ENCODE measurements at regions of chr3 and their contacts with region 1.

Region 1: GRCh38 chr3:51941798-51942602 is at the starts of genes PARP3 and RRP9:
- DNase-seq: peak; percentile 100
- H3K4me3 Mint-ChIP-seq: peak within 1 kb of the TSS; percentile 88
- H3K27ac Mint-ChIP-seq: peak within 1 kb of the TSS; percentile 82
- H3K4me1 Mint-ChIP-seq: peaks cover 33% of the 10 kb centered on the region
- H3K27me3 Mint-ChIP-seq: no peaks in the 10 kb centered on the region
- total RNA-seq, gene PARP3: 10.0 to 11.1 TPM
- total RNA-seq, gene RRP9: 24.6 to 25.0 TPM

Region 2: GRCh38 chr3:51921081-51921578 is 20.9 kb before region 1 on chr3:
- CTCF ChIA-PET with region 1: no interaction called
- intact Hi-C with region 1: no loop called
- DNase-seq: no peak
- H3K4me3 Mint-ChIP-seq: no peak overlapping the region
- H3K27ac Mint-ChIP-seq: no peak overlapping the region
- H3K4me1 Mint-ChIP-seq: no peaks in the 10 kb centered on the region
- H3K27me3 Mint-ChIP-seq: no peaks in the 10 kb centered on the region

Region 3: GRCh38 chr3:51955893-51956770 is 14.1 kb after region 1 on chr3:
- CTCF ChIA-PET with region 1: interaction called, 6 read pairs
- intact Hi-C with region 1: loop called (anchors 1 kb)
- DNase-seq: peak; percentile 50
- H3K4me3 Mint-ChIP-seq: peak overlapping the region; percentile 33
- H3K27ac Mint-ChIP-seq: no peak overlapping the region
- H3K4me1 Mint-ChIP-seq: no peaks in the 10 kb centered on the region
- H3K27me3 Mint-ChIP-seq: peaks cover 17% of the 10 kb centered on the region

Region 4: DNA sequence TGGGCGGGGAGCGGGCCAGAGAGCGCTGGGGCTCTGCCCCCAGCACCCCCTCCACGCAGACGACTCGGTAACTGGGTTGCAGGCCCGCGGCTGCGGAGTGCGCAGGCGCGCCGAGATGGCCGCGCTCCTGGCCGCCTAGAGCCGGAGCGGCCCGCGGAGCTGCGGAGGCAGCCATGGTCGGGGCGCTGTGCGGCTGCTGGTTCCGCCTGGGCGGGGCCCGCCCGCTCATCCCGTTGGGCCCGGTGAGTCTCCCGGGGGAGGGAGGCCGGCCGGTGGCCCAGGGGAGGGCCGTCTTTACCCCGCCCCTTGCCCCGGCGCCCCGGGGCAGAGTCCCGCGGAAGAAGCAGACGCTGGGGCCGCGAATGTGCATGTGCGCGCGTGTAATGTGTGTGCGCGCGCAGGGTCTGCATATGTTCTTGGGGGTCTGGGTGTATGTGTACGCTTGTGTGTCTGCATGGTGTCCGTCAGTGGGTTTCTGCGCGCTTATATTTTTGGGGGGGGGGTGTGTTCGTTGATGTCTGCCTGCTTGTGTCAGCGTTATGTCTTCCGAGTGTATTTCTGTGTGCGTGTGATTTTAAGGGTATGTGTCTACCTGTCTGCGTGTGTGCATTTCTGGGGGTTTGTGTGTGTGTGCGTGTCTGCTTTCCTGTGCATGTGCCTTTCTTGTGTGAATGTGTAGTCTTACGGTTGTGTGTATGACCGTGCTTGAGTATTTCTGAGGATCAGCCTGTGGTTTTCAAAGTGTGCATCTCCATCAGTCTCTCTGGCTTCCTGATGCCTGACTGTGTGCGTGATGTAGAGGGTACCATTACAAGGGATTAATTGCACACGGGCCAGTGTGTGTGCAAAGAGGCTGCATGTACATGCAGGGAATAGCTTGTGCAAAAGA is 33.2 kb after region 1 on chr3 and contains the start of gene ABHD14A:
- CTCF ChIA-PET with region 1: interaction called, 25 read pairs
- intact Hi-C with region 1: loop called (anchors 1 kb)
- DNase-seq: peak; percentile 70
- H3K4me3 Mint-ChIP-seq: peak within 1 kb of the TSS; percentile 99
- H3K27ac Mint-ChIP-seq: peak within 1 kb of the TSS; percentile 97
- H3K4me1 Mint-ChIP-seq: peaks cover 37% of the 10 kb centered on the region
- H3K27me3 Mint-ChIP-seq: no peaks in the 10 kb centered on the region
- total RNA-seq, gene ABHD14A: 5.4 to 5.7 TPM

Region 5: DNA sequence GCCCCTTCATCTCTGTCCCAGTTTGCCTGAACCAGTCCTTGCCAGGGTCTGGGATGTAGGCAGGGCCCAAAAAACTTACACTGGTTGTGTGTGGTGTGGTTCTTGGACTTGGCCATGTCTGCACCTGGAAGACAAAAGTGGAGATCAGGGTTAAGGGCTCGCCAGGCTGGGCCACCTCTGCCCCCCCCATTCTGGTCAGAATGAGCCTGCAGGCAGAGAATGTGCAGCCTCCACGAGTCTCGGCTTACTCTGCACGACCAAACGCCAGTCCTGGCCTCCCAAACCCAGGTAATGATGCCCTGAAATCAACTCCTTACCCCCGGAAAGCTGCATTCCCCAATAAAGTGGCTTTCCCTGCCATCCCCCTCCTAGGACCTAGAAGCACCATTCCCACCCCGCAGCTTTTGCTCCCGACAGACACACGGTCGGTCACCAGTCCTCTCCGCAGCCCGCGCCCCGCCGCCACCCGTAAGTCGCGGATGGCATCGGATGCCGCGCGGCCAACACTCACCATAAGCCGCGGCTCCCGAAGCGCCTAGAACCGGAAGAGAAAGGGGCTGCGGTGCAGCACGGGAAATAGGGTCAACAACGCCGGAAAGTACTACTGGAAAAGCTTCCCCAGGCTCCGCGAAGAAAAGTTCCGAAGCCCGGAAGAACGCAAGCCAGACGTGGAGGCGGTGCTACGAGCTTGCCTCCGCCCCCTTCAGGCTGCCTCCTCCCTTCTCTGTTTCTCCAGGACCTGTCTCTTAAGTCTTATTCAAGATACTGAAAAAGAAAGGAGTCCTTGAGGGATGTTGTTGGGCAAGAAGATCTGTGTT is 53.6 kb after region 1 on chr3 and contains the start of gene RPL29:
- CTCF ChIA-PET with region 1: interaction called, 5 read pairs
- intact Hi-C with region 1: loop called (anchors 1 kb)
- DNase-seq: peak; percentile 96
- H3K4me3 Mint-ChIP-seq: peak within 1 kb of the TSS; percentile 98
- H3K27ac Mint-ChIP-seq: peak within 1 kb of the TSS; percentile 100
- H3K4me1 Mint-ChIP-seq: peaks cover 28% of the 10 kb centered on the region
- H3K27me3 Mint-ChIP-seq: no peaks in the 10 kb centered on the region
- total RNA-seq, gene RPL29: 1,927 to 1,957 TPM

Region 6: DNA sequence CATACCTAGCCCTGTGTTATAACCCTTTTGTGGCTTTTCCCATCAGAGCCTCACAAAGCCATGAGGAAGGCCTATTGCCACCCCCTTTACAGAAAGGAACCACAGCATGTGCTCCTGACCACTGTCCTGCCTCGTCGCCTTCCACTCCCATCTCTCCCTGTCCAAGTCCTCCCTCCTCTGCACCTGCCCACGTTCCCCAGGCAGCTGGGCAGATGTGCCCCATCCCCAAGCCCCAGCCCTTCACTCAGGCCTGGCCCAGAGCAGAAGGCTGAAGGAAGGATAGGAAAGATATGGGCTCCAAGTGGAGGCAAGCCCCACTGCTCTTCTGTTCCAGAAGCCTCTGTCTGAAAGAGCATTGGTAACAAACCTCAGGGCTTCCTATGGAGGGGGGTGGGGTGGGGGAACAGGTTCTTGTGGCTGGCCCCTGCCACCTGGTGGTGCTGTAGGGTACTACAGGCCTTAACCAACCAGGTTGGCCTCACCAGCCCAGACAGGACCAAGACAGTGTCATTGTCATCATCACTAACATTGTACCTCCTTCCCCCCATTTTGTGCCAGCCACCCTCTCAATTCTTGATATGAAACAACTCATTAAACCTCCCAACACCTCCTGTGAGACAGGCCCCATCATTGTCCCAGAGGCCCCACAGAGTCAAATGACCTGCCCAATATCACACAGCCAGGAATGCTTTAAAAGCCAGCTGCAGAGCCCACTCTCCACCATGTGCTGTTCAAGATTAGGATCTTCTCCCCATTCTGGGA is 202.2 kb after region 1 on chr3:
- CTCF ChIA-PET with region 1: interaction called, 3 read pairs
- intact Hi-C with region 1: loop called (anchors 1 kb)
- DNase-seq: peak; percentile 86
- H3K4me3 Mint-ChIP-seq: no peak overlapping the region
- H3K27ac Mint-ChIP-seq: no peak overlapping the region
- H3K4me1 Mint-ChIP-seq: peaks cover 4% of the 10 kb centered on the region
- H3K27me3 Mint-ChIP-seq: no peaks in the 10 kb centered on the region

Region 7: GRCh38 chr3:52197842-52198668 is 256.1 kb after region 1 on chr3 and contains the start of gene ALAS1:
- CTCF ChIA-PET with region 1: no interaction called
- intact Hi-C with region 1: loop called (anchors 1 kb)
- DNase-seq: peak; percentile 94
- H3K4me3 Mint-ChIP-seq: peak within 1 kb of the TSS; percentile 92
- H3K27ac Mint-ChIP-seq: peak within 1 kb of the TSS; percentile 84
- H3K4me1 Mint-ChIP-seq: peaks cover 56% of the 10 kb centered on the region
- H3K27me3 Mint-ChIP-seq: no peaks in the 10 kb centered on the region
- total RNA-seq, gene ALAS1: 35.7 to 37.8 TPM